Naive thymus-derived CD8-positive, alpha-beta T cell (primary cell): ENCODE measurements at regions of chr2 and their contacts with region 1.

Region 1: DNA sequence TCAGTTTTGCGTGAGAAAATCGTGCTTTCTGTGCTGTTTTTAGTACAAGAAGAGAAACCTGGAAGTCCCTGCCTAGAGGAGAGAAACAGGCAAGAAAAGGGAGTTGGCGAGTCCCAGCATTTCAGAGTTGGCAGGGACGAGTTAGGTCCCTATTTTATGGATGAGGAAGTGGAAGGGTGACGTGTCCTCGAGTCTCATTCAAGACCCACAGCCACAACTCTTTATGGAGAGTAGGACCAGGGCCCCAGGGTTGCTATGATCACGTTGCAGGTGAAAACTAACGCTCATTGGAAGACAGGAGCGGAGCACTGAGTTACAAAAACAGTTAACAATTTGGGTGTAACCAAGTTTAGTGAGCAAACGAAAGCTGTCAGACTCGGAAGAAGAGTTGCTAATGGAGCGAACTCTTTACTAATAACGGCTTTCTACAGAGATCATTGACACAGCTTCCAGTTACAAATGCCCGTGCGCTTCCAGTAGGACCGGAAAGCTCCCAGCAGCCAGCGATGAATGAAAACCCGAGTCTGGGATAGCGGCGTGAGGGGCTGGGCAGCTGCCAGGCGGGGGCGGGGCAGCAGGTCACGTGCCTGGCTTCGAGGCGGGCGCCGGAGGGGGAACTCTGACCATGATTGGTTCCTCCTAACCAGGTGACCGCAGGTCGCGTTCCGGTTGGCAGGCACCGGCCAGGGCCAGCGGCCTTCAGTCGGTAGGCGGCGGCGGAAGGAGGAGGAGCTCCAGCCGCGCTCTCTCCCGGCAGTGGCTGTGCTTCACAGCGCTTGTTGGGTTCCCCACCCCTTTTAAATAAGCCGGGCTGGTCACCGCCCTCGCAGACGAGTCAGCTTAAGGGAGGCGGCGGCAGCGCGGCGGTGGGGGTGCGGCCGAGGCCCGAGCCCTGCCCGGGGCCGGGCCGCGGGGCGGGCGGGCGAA is at the start of gene CCNYL1:
- DNase-seq: peak; percentile 94 to 99 (median 98)
- ATAC-seq: peak; percentile 95 to 97
- H3K4me3 Mint-ChIP-seq: peak within 1 kb of the TSS; percentile 93 to 99 (median 96)
- H3K27ac Mint-ChIP-seq: peak within 1 kb of the TSS; percentile 81 to 97 (median 92)
- H3K4me1 Mint-ChIP-seq: peaks cover 18 to 28% (median 26%) of the 10 kb centered on the region in 4 donors
- H3K27me3 Mint-ChIP-seq: no peaks in the 10 kb centered on the region
- polyA plus RNA-seq, gene CCNYL1: 1.2 to 2.1 (median 1.3) TPM

Region 2: GRCh38 chr2:207625018-207625907 is 85.8 kb before region 1 on chr2 and contains the start of gene METTL21A:
- POLR2A ChIA-PET with region 1: interaction called, 47 read pairs
- DNase-seq: peak; percentile 89 to 96 (median 94)
- ATAC-seq: peak; percentile 73 to 79
- H3K4me3 Mint-ChIP-seq: peak within 1 kb of the TSS; percentile 83 to 96 (median 94)
- H3K27ac Mint-ChIP-seq: peak within 1 kb of the TSS; percentile 23 to 98 (median 97)
- H3K4me1 Mint-ChIP-seq: peaks cover 19 to 50% (median 46%) of the 10 kb centered on the region in 4 donors
- H3K27me3 Mint-ChIP-seq: no peaks in the 10 kb centered on the region
- polyA plus RNA-seq, gene METTL21A: 34.2 to 50.4 (median 39.4) TPM

Region 3: GRCh38 chr2:207725873-207726578 is 14.9 kb after region 1 on chr2:
- POLR2A ChIA-PET with region 1: interaction called, 20 read pairs
- DNase-seq: peak in 4 of 10 donors; percentile 6 to 34 (median 22)
- ATAC-seq: peak; percentile 42 to 47
- H3K4me3 Mint-ChIP-seq: no peak overlapping the region
- H3K27ac Mint-ChIP-seq: peak overlapping the region in 7 of 10 donors; percentile 3 to 54 (median 30)
- H3K4me1 Mint-ChIP-seq: peaks cover 10 to 37% (median 29%) of the 10 kb centered on the region in 4 donors
- H3K27me3 Mint-ChIP-seq: no peaks in the 10 kb centered on the region